PC-9 (cell line): ENCODE measurements at regions of chr1 and their contacts with region 1.

Region 1: GRCh38 chr1:11735854-11736745 is at the start of gene AGTRAP:
- DNase-seq: peak; percentile 78 to 91
- H3K4me3 ChIP-seq: peak within 1 kb of the TSS; percentile 79
- H3K27ac ChIP-seq: peak within 1 kb of the TSS; percentile 96
- H3K4me1 ChIP-seq: peaks cover 9% of the 10 kb centered on the region
- H3K27me3 ChIP-seq: no peaks in the 10 kb centered on the region
- CTCF ChIP-seq: no peak
- total RNA-seq, gene AGTRAP: 75.5 and 77.7 TPM in 2 replicates

Region 2: DNA sequence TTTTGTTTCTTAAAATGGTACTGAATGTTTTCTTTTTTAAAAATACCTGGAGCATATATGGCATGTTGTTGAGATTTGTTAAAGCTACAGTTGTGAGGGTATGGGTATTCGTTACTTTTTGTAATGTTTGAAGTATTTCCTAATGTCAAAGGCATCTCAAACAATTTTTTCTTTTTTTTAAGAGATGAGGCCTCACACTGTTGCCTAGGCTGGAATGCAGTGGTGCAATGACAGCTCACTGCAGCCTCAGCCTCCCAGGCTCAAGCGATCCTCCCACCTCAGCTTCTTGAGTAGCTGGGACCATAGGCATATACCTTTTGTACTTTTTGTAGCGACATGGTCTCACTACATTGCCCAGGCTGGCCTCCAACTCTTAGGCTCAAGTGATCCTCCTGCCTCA is 86.0 kb after region 1 on chr1:
- CTCF ChIA-PET with region 1: no interaction called
- POLR2A ChIA-PET with region 1: interaction called, 3 read pairs
- intact Hi-C with region 1: loop called (anchors 5 kb)
- DNase-seq: no peak
- H3K4me3 ChIP-seq: peak overlapping the region; percentile 26; the same call in 1 of the 2 replicates
- H3K27ac ChIP-seq: peak overlapping the region; percentile 85
- H3K4me1 ChIP-seq: peaks cover 21% of the 10 kb centered on the region
- H3K27me3 ChIP-seq: no peaks in the 10 kb centered on the region
- CTCF ChIP-seq: no peak

Region 3: GRCh38 chr1:11893907-11894251 is 157.8 kb after region 1 on chr1:
- CTCF ChIA-PET with region 1: no interaction called
- POLR2A ChIA-PET with region 1: no interaction called
- intact Hi-C with region 1: loop called (anchors 10 kb)
- DNase-seq: peak; percentile 38 to 68
- H3K4me3 ChIP-seq: no peak overlapping the region
- H3K27ac ChIP-seq: no peak overlapping the region
- H3K4me1 ChIP-seq: no peaks in the 10 kb centered on the region
- H3K27me3 ChIP-seq: no peaks in the 10 kb centered on the region
- CTCF ChIP-seq: peak; percentile 88